MCF 10A (cell line): ENCODE measurements at regions of chr10 and their contacts with region 1.

Region 1: DNA sequence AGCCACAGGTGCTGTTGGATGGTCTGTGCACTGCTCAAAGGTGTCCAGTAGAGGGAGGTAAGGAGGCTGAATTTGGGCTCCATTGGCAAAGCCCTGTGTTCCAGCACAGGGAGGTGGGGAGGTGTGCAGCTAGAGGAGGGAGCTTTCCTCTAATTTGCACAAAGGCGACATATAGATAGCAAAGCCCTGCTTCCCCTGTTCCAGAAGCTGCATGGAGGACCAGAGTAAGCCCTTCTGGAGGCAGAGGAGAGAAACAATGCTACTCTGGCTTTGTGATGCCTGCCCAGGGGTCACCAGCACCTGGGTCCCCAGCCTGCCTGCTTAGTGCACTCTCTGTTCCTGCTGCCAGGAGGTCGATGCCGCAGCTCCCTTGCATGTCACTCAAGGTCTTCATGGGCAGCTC is 3.4 kb upstream of the ARHGAP22 start:
- DNase-seq: peak; percentile 75
- H3K4me3 Mint-ChIP-seq: no peak overlapping the region
- H3K27ac Mint-ChIP-seq: no peak overlapping the region
- H3K4me1 Mint-ChIP-seq: peaks cover 26% of the 10 kb centered on the region
- H3K27me3 Mint-ChIP-seq: no peaks in the 10 kb centered on the region
- CTCF ChIP-seq: peak; percentile 70

Region 2: DNA sequence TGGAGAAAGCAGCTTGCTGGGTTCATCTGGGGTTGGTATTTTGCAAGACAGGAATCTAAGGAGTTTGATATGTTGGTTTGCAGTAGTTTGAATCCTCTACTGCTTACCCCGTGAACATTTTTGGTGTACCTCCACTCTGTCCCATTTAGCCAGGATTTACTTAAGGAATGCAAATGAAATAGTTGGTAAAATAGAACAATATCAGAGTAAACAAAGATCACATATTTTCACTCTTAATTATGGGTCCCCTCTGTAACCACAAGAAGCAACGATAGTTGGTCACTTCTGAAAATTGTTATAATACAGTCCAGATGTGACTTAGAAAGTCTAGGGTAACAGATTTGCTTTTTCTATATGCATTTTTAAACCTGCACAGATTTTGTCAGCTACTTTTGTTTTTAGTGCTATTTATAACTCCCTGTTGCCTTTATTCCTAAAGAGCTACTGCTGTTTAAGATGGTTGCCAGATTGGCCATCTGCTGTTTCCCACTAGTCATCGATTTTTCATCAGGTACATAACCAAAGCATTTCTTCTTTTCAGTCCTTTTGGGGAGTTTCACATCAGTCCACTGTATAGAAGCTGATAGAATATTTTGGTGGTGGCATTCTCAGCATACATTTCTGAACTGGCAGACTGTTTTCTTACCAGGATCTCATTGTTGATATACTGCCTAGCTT is 264.2 kb before region 1 on chr10:
- CTCF ChIA-PET with region 1: no interaction called
- POLR2A ChIA-PET with region 1: no interaction called
- intact Hi-C with region 1: no loop called
- DNase-seq: no peak
- H3K4me3 Mint-ChIP-seq: no peak overlapping the region
- H3K27ac Mint-ChIP-seq: no peak overlapping the region
- H3K4me1 Mint-ChIP-seq: peaks cover 10% of the 10 kb centered on the region
- H3K27me3 Mint-ChIP-seq: no peaks in the 10 kb centered on the region
- CTCF ChIP-seq: no peak

Region 3: GRCh38 chr10:48589266-48589665 is 19.0 kb before region 1 on chr10:
- CTCF ChIA-PET with region 1: interaction called, 21 read pairs
- POLR2A ChIA-PET with region 1: interaction called, 4 read pairs
- intact Hi-C with region 1: no loop called
- DNase-seq: peak; percentile 87
- H3K4me3 Mint-ChIP-seq: peak overlapping the region; percentile 44
- H3K27ac Mint-ChIP-seq: peak overlapping the region; percentile 90
- H3K4me1 Mint-ChIP-seq: peaks cover 20% of the 10 kb centered on the region
- H3K27me3 Mint-ChIP-seq: no peaks in the 10 kb centered on the region
- CTCF ChIP-seq: no peak